CD8-positive, alpha-beta memory T cell (primary cell): ENCODE measurements at regions of chr16 and their contacts with region 1.

Region 1: GRCh38 chr16:31142109-31143010 is 6.8 kb upstream of the PRSS8 start:
- DNase-seq: peak; percentile 93 to 99 (median 95)
- H3K4me3 ChIP-seq: peak overlapping the region; percentile 59
- H3K4me3 Mint-ChIP-seq: peak overlapping the region; percentile 68 to 92 (median 78)
- H3K27ac ChIP-seq: peak overlapping the region; percentile 61
- H3K27ac Mint-ChIP-seq: peak overlapping the region; percentile 74 to 90 (median 86)
- H3K4me1 ChIP-seq: peaks cover 19% of the 10 kb centered on the region
- H3K4me1 Mint-ChIP-seq: peaks cover 5 to 14% (median 6%) of the 10 kb centered on the region in 3 donors
- H3K27me3 ChIP-seq: no peaks in the 10 kb centered on the region
- H3K27me3 Mint-ChIP-seq: no peaks in the 10 kb centered on the region

Region 2: DNA sequence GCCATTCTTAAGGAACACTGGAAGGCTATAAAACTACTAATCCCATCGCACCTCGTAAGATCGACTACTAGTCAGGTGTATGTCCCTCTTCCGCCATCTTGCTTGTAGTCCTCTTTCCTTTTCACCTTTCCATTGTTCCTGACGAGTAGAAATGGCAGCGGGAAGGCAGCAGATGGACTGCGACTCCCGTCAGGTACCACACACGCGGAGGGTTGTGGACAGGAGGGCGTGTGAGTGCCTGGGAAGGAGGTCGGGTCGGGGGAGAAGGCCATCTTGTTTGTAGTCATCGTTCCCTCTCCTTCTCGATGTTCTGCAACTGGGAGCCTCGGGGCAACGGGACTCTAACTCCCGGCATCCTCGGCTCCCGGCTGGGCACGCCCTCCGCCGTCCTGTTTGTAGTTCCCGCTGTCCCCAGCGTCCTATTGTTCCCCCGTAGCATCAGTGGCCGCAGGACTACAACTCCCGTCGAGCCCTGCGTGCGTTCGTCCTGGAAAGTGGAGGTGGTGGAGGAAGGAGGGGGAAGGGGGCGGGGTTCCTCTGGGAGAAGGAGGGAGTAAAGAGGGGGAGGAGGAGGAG is 219.3 kb before region 1 on chr16:
- CTCF ChIA-PET with region 1: no interaction called
- POLR2A ChIA-PET with region 1: no interaction called
- DNase-seq: peak; percentile 93 to 97 (median 95)
- H3K4me3 ChIP-seq: peak overlapping the region; percentile 95
- H3K4me3 Mint-ChIP-seq: peak overlapping the region; percentile 93 to 99 (median 96)
- H3K27ac ChIP-seq: peak overlapping the region; percentile 84
- H3K27ac Mint-ChIP-seq: peak overlapping the region; percentile 95 to 100 (median 98)
- H3K4me1 ChIP-seq: no peaks in the 10 kb centered on the region
- H3K4me1 Mint-ChIP-seq: peaks cover 15 to 33% (median 16%) of the 10 kb centered on the region in 3 donors
- H3K27me3 ChIP-seq: no peaks in the 10 kb centered on the region
- H3K27me3 Mint-ChIP-seq: no peaks in the 10 kb centered on the region

Region 3: DNA sequence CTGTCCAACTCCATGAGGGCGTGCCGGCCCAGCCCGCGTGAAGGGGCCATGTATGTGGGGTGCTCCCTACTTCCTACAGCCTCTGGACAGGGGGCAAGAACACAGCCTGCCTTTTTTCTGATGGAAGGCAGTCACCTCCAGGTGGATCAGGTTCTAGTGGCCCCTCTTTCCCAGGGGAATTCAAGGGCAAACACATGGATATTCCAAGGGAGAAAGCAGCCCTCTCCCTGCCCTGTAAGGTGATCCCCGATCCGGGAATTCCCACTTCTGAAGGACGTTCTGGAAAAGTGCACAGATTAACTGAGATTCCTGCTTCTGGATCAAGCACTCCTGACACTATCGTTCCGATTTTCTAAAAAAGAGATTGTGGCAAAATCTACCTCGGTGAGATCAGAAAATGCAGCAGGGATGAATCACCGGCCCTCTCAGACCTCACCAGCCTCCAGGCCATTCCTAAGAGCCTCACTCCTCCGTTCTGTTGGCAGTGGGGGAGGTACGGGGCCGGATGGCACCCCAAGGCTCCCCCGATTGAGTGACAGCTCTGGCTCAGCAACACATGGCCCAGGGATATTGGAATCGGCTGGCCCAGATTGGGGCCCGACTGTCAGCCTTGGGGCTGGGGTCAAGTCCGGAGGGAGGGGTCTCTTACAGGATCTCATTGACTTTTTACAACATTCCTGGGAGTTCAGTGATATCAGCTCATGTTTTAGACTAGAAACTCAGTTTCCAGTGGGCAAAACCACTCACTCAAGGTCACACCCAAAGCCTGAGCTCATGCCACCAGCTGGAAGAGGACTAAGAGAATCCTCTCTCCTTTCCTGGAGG is 144.3 kb before region 1 on chr16:
- CTCF ChIA-PET with region 1: interaction called, 10 read pairs
- POLR2A ChIA-PET with region 1: interaction called, 9 read pairs
- DNase-seq: no peak
- H3K4me3 ChIP-seq: no peak overlapping the region
- H3K4me3 Mint-ChIP-seq: peak overlapping the region in 5 of 7 donors; percentile 47 to 92 (median 85)
- H3K27ac ChIP-seq: no peak overlapping the region
- H3K27ac Mint-ChIP-seq: peak overlapping the region in 2 of 8 donors; percentile 24 to 38
- H3K4me1 ChIP-seq: peaks cover 13% of the 10 kb centered on the region
- H3K4me1 Mint-ChIP-seq: peaks cover 0 to 9% (median 6%) of the 10 kb centered on the region in 3 donors
- H3K27me3 ChIP-seq: no peaks in the 10 kb centered on the region
- H3K27me3 Mint-ChIP-seq: no peaks in the 10 kb centered on the region

Region 4: DNA sequence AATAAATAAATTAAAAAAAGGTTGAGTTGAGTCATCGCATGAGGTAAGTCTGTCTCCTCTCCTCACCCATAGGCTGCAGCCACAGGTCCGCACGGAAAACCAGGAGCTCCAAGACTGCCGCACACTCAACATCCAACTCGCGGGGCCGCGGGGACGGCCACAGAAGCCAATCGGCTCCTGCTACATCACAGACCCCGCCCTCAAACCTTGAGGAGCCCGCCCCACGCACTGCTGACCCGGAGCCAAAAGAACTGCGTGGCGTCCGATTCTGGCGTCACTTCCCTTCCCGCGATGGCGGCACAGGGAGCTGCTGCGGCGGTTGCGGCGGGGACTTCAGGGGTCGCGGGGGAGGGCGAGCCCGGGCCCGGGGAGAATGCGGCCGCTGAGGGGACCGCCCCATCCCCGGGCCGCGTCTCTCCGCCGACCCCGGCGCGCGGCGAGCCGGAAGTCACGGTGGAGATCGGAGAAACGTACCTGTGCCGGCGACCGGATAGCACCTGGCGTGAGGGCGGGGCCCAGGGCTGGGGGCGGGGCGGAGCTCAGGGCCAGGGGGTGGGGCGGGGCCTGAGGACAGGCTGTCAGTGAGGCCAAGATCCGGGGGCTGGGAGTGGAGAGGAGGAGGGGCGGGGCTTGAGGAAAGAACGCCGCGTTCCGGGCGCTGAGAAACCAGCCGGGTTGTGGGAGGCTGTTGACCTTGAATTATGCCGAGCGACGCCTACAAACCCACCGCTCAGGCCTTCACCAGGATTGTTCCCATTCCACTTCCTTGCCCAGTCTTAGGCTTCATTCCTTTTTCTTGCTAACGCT is 24.8 kb before region 1 on chr16 and contains the start of gene KAT8:
- CTCF ChIA-PET with region 1: interaction called, 34 read pairs
- POLR2A ChIA-PET with region 1: interaction called, 59 read pairs
- DNase-seq: peak; percentile 96 to 98 (median 97)
- H3K4me3 ChIP-seq: peak within 1 kb of the TSS; percentile 90
- H3K4me3 Mint-ChIP-seq: peak within 1 kb of the TSS; percentile 83 to 95 (median 89)
- H3K27ac ChIP-seq: peak within 1 kb of the TSS; percentile 90
- H3K27ac Mint-ChIP-seq: peak within 1 kb of the TSS; percentile 76 to 99 (median 96)
- H3K4me1 ChIP-seq: peaks cover 12% of the 10 kb centered on the region
- H3K4me1 Mint-ChIP-seq: peaks cover 13 to 18% (median 16%) of the 10 kb centered on the region in 3 donors
- H3K27me3 ChIP-seq: no peaks in the 10 kb centered on the region
- H3K27me3 Mint-ChIP-seq: no peaks in the 10 kb centered on the region
- total RNA-seq, gene KAT8: 56.1 to 58.6 TPM

Region 5: GRCh38 chr16:31157136-31157535 is 14.8 kb after region 1 on chr16:
- CTCF ChIA-PET with region 1: interaction called, 22 read pairs
- POLR2A ChIA-PET with region 1: no interaction called
- DNase-seq: no peak
- H3K4me3 ChIP-seq: no peak overlapping the region
- H3K4me3 Mint-ChIP-seq: peak overlapping the region in 2 of 7 donors; percentile 32 to 55
- H3K27ac ChIP-seq: no peak overlapping the region
- H3K27ac Mint-ChIP-seq: no peak overlapping the region
- H3K4me1 ChIP-seq: peaks cover 6% of the 10 kb centered on the region
- H3K4me1 Mint-ChIP-seq: peaks cover 4 to 8% (median 6%) of the 10 kb centered on the region in 3 donors
- H3K27me3 ChIP-seq: no peaks in the 10 kb centered on the region
- H3K27me3 Mint-ChIP-seq: peaks cover 0 to 2% of the 10 kb centered on the region in 2 donors

Region 6: GRCh38 chr16:31440516-31441184 is 298.3 kb after region 1 on chr16:
- CTCF ChIA-PET with region 1: interaction called, 11 read pairs
- POLR2A ChIA-PET with region 1: no interaction called
- DNase-seq: no peak
- H3K4me3 ChIP-seq: no peak overlapping the region
- H3K4me3 Mint-ChIP-seq: peak overlapping the region in 3 of 7 donors; percentile 34 to 84 (median 40)
- H3K27ac ChIP-seq: no peak overlapping the region
- H3K27ac Mint-ChIP-seq: peak overlapping the region in 1 of 8 donors; percentile 2
- H3K4me1 ChIP-seq: no peaks in the 10 kb centered on the region
- H3K4me1 Mint-ChIP-seq: peaks cover 12 to 19% (median 18%) of the 10 kb centered on the region in 3 donors
- H3K27me3 ChIP-seq: no peaks in the 10 kb centered on the region
- H3K27me3 Mint-ChIP-seq: peaks cover 0 to 3% of the 10 kb centered on the region in 2 donors